ENCODE measurements at regions of chr1 and their contacts with region 1.

Region 1: GRCh38 chr1:32716312-32717148 is 14.0 kb upstream of the SYNC start:
- DNase-seq: peak; percentile 94
- H3K4me3 ChIP-seq: no peak overlapping the region
- H3K27ac ChIP-seq: peak overlapping the region; percentile 11
- H3K4me1 ChIP-seq: peaks cover 20% of the 10 kb centered on the region
- H3K27me3 ChIP-seq: no peaks in the 10 kb centered on the region
- CTCF ChIP-seq: no peak

Region 2: DNA sequence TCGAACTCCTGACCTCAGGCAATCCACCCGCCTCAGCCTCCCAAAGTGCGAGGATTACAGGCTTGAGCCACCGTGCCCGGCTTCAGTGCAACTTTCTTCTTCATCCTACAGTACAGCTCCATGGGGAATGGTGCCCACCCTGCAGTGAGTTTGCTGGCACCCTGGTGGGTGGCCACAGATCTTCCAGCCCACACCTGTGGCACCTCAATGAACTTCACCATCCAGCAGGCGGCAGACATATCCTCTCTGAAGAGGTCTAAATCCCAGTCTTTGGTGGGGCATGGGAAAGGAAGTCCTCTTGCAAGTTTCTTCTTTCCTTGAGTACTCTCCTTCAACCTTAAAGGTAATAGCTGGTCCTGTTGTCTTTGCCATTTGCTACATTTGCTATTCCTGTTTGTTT is 195.4 kb before region 1 on chr1:
- CTCF ChIA-PET with region 1: no interaction called
- dilution Hi-C with region 1: no loop called
- in situ Hi-C with region 1: no loop called
- intact Hi-C with region 1: loop called (anchors 2 kb)
- DNase-seq: no peak
- H3K4me3 ChIP-seq: no peak overlapping the region
- H3K27ac ChIP-seq: no peak overlapping the region
- H3K4me1 ChIP-seq: no peaks in the 10 kb centered on the region
- H3K27me3 ChIP-seq: no peaks in the 10 kb centered on the region
- CTCF ChIP-seq: peak in 1 of 2 donors; percentile 18

Region 3: GRCh38 chr1:32729254-32730046 is 12.9 kb after region 1 on chr1:
- CTCF ChIA-PET with region 1: no interaction called
- dilution Hi-C with region 1: no loop called
- in situ Hi-C with region 1: no loop called
- intact Hi-C with region 1: no loop called
- DNase-seq: no peak
- H3K4me3 ChIP-seq: no peak overlapping the region
- H3K27ac ChIP-seq: no peak overlapping the region
- H3K4me1 ChIP-seq: peaks cover 24% of the 10 kb centered on the region
- H3K27me3 ChIP-seq: no peaks in the 10 kb centered on the region
- CTCF ChIP-seq: no peak

Region 4: GRCh38 chr1:32753532-32754312 is 37.2 kb after region 1 on chr1:
- CTCF ChIA-PET with region 1: no interaction called
- dilution Hi-C with region 1: no loop called
- in situ Hi-C with region 1: loop called in 1 of 2 experiments (anchors 5 kb)
- intact Hi-C with region 1: no loop called
- DNase-seq: peak; percentile 77
- H3K4me3 ChIP-seq: peak overlapping the region; percentile 42 to 89 (median 65)
- H3K27ac ChIP-seq: no peak overlapping the region
- H3K4me1 ChIP-seq: peaks cover 35% of the 10 kb centered on the region
- H3K27me3 ChIP-seq: no peaks in the 10 kb centered on the region
- CTCF ChIP-seq: no peak

Region 5: GRCh38 chr1:32773018-32773763 is 56.7 kb after region 1 on chr1:
- CTCF ChIA-PET with region 1: interaction called, 18 read pairs
- dilution Hi-C with region 1: loop called (anchors 5 kb)
- in situ Hi-C with region 1: loop called in 1 of 2 experiments (anchors 5 kb)
- intact Hi-C with region 1: loop called (anchors 1 kb)
- DNase-seq: peak; percentile 75
- H3K4me3 ChIP-seq: no peak overlapping the region
- H3K27ac ChIP-seq: no peak overlapping the region
- H3K4me1 ChIP-seq: peaks cover 35% of the 10 kb centered on the region
- H3K27me3 ChIP-seq: no peaks in the 10 kb centered on the region
- CTCF ChIP-seq: peak; percentile 93 to 95

Region 6: DNA sequence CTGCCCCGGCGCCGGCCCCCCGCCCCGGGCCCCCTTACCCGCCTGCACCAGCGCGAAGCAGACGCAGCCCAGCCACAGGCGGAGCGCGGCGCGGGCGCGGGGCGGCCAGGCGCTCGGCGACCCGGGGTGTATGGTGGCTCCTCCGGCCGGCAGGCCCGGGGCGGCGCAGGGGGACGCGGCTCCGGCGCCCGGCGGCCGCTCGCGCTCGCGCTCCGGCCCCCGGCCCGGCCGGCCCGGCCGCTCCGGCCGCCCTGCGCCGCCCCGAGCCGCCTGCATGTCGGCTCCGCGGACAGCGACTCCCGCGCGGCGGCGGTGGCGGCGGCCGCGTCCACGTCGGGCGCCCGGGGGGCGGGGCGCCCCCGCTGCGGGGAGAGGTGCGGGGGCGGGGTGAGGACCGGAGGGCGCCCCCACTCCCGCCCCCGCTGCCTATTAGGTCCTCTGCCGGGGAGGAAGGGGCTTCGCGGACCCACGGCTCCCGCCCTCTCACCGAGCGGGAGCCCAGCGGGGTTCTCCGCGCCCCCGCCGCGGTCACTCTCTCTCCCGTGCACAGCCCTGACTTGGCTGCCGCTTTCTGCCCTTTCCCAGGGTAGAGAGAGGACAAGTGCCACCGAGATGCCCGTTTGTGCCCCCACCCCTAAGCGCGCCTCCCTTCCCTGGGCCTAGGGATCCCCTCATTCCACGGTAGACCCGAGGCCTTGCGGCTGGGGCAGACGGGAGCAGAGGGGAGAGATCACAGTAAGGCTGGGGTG is 154.3 kb after region 1 on chr1 and contains the start of gene FNDC5:
- CTCF ChIA-PET with region 1: no interaction called
- dilution Hi-C with region 1: no loop called
- in situ Hi-C with region 1: no loop called
- intact Hi-C with region 1: loop called (anchors 1 kb)
- DNase-seq: no peak
- H3K4me3 ChIP-seq: peak within 1 kb of the TSS in 2 of 3 experiments; percentile 30 to 40
- H3K27ac ChIP-seq: no peak within 1 kb of the TSS
- H3K4me1 ChIP-seq: no peaks in the 10 kb centered on the region
- H3K27me3 ChIP-seq: peaks cover 8% of the 10 kb centered on the region
- CTCF ChIP-seq: no peak
- total RNA-seq, gene FNDC5: not detected